ENCODE measurements at regions of chr18 and their contacts with region 1.

Region 1: DNA sequence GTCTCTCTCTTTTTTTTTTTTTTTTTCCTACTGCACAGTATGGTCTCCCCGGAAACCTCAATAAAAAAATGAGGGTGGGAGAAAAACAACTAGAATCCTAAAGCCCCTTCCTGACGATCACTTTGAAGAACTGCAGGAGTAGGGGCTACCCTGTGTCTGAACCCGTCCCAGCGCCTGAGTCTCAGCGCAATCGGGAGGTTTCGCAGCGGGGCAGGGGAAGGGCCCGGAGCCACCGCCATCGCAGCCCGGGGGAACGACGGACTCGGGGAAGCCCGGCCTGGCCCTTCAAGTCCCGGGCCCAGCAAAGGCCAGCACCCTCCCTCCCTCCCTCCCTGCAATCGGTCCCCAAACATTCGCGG is 411 bp downstream of the NARS1 start:
- DNase-seq: no peak
- H3K4me3 ChIP-seq: peak overlapping the region; percentile 90 to 94
- H3K27ac ChIP-seq: peak overlapping the region; percentile 85
- H3K4me1 ChIP-seq: peaks cover 27% of the 10 kb centered on the region
- H3K27me3 ChIP-seq: no peaks in the 10 kb centered on the region
- CTCF ChIP-seq: no peak
- POLR2A ChIP-seq: no peak

Region 2: DNA sequence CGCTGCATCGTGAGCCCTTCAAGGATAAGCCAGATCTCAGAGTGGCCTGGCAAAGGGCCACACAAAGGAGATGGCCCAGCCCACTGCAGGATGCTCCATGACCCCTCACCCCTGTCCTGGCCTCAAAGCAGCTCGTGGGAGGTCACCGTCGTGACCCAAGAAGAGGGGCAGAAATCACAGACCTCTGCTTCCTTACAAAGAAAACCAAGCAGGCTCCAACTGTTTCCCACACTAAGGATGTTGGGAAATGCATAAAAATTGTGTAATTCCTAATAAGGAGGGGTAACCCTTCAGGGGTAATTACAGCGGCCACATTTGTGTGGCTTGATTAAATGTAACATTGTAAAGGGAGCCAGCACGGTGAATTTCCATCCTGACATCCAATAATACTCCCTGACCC is 372.0 kb before region 1 on chr18:
- intact Hi-C with region 1: no loop called
- DNase-seq: no peak
- H3K4me3 ChIP-seq: no peak overlapping the region
- H3K27ac ChIP-seq: no peak overlapping the region
- H3K4me1 ChIP-seq: no peaks in the 10 kb centered on the region
- H3K27me3 ChIP-seq: no peaks in the 10 kb centered on the region
- CTCF ChIP-seq: no peak
- POLR2A ChIP-seq: no peak

Region 3: GRCh38 chr18:57803103-57803969 is 182.1 kb after region 1 on chr18 and contains the start of gene ATP8B1:
- intact Hi-C with region 1: loop called (anchors 10 kb)
- DNase-seq: no peak
- H3K4me3 ChIP-seq: peak within 1 kb of the TSS; percentile 77 to 78
- H3K27ac ChIP-seq: peak within 1 kb of the TSS; percentile 85
- H3K4me1 ChIP-seq: peaks cover 29% of the 10 kb centered on the region
- H3K27me3 ChIP-seq: no peaks in the 10 kb centered on the region
- CTCF ChIP-seq: no peak
- POLR2A ChIP-seq: peak in 1 of 2 donors; percentile 68
- total RNA-seq, gene ATP8B1: 41.5 TPM

Measured in vagina (tissue), 2 donors.